Common myeloid progenitor, CD34-positive (primary cell): ENCODE measurements at regions of chr1 and their contacts with region 1.

Region 1: DNA sequence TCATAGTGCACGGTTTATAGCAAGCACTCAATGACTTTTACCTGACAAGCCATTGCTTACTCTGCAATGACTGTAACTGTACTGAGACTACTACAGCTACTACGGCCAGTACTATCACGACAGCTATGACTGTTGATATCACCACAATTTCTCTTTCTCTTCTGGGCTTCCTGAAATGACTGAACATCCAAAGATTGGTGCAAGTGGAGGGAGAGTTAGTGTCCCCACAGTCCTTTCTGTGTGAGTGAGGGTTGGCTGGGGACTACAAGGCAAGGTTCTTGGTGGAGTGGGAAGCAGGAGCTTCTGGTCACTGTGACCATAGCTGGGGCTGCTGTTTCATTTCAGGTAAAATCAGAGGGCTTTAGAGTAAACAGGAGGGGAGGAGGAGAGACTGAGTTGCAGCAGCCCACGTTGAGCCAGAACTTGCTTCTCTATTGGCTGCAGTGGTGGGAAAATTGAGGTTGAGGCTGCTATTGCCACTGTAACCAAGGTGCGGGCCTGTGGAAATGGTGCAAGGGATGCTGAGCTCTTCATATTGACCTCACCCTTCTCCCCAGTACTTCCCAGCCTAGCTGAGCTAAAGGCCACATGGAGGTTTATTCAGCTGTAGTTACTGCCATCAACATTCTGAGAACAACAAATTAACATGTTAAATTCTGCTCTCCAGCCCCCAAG is 14.1 kb upstream of the IL10 start:
- DNase-seq: no peak
- H3K4me3 ChIP-seq: no peak overlapping the region
- H3K27ac ChIP-seq: no peak overlapping the region
- H3K4me1 ChIP-seq: peaks cover 12 to 49% (median 21%) of the 10 kb centered on the region in 4 experiments
- H3K27me3 ChIP-seq: no peaks in the 10 kb centered on the region

Region 2: DNA sequence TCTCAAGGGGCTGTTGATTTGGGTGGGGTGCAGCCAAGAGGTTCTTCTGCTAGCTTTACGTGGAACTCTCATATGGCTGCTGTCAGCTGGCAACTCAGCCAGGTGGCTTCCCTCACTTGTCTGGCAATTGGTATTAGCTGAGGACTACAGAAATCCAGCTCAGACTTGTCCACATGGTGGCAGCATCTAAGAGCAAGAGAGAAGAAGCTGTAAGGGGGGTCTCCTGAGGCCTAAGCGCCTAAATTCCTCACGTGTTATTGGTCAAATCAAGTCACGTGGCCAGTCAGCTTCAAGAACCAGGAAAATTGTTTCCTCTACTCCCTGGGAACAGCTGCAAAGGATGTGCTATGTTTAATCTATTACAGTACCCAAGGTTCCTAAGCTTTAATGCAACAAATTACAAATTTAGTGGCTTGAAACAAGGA is 155.3 kb before region 1 on chr1:
- CTCF ChIA-PET with region 1: no interaction called
- POLR2A ChIA-PET with region 1: no interaction called
- DNase-seq: peak; percentile 86 to 90 (median 88)
- H3K4me3 ChIP-seq: no peak overlapping the region
- H3K27ac ChIP-seq: no peak overlapping the region
- H3K4me1 ChIP-seq: peaks cover 7 to 14% (median 10%) of the 10 kb centered on the region in 4 experiments
- H3K27me3 ChIP-seq: no peaks in the 10 kb centered on the region

Region 3: DNA sequence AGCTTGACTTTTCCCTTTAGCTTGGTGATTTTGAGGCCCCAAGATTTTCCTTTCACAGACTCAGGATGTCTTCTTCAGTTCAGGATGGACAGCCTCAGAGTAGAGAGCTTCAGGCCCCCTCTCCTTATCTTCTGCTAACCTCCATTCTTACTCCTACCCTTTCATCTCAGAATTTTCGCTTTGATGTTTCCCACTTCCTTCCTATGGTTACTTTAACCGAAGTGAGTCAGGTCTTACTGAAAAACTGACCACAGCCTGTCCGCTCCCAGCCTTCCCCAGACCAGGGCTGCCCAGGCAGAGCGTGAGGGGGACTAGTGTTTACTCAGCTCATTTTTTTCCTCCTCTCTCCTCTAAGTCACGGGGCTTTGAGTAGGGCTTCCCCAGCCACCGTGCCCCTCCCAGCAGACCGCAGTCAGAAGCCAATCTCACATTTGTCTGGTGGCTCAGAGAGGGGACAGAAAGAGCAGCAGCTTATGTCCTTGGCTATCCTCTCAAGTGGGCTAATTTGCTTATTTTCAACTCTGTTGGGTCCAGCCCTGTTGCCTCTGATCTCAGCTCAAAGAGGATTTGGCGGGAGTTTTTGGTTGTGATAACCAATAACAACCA is 20.0 kb before region 1 on chr1:
- CTCF ChIA-PET with region 1: interaction called, 11 read pairs
- POLR2A ChIA-PET with region 1: no interaction called
- DNase-seq: peak; percentile 67 to 85 (median 82)
- H3K4me3 ChIP-seq: peak overlapping the region in 3 of 7 experiments; percentile 36 to 52 (median 39)
- H3K27ac ChIP-seq: no peak overlapping the region
- H3K4me1 ChIP-seq: peaks cover 7 to 62% (median 39%) of the 10 kb centered on the region in 4 experiments
- H3K27me3 ChIP-seq: no peaks in the 10 kb centered on the region

Region 4: DNA sequence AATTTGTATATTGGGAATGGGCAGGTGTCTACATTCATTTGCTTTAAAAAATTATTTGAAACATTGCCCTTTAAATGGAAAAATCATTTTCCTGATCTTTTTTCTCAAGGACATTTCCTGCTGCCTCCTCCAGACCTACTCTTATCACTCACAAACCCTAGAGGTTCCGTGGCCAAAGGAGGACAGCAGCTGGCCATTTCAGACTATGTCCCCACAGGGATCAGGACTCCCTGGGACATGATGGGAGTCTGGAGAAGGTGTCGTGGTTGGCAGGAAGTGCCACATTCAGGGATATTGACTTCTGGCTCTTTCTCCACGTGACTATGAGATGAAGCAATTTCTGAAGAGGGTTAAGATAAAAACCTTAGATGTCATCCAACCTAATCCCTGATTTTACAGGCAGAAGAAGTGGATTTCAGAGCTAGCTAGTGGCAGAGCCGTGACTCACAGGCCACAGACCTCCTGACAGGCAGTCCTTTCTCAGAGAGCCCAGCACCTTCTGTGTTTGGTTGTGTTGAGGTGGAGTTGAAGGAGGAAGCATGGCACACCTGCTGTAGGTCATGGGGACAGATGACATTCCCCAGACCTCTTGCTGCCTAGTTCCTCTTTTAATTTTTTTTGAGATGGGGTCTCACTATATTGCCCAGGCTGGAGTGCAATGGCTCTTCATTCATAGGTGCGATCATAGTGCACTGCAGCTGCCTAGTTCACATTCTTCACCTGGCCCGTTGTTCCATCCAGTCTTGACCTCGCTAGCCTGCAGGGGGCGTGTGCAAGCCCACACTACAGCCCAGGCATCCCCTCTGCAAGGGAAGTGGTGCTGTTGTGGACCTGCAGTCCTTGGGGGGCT is 11.4 kb after region 1 on chr1:
- CTCF ChIA-PET with region 1: interaction called, 18 read pairs
- POLR2A ChIA-PET with region 1: no interaction called
- DNase-seq: peak; percentile 42 to 72 (median 60)
- H3K4me3 ChIP-seq: no peak overlapping the region
- H3K27ac ChIP-seq: no peak overlapping the region
- H3K4me1 ChIP-seq: peaks cover 0 to 13% (median under 1%) of the 10 kb centered on the region in 4 experiments
- H3K27me3 ChIP-seq: no peaks in the 10 kb centered on the region

Region 5: GRCh38 chr1:206803221-206803730 is 16.9 kb after region 1 on chr1:
- CTCF ChIA-PET with region 1: interaction called, 18 read pairs
- POLR2A ChIA-PET with region 1: no interaction called
- DNase-seq: no peak
- H3K4me3 ChIP-seq: no peak overlapping the region
- H3K27ac ChIP-seq: no peak overlapping the region
- H3K4me1 ChIP-seq: peaks cover 0 to 10% (median under 1%) of the 10 kb centered on the region in 4 experiments
- H3K27me3 ChIP-seq: no peaks in the 10 kb centered on the region

Region 6: GRCh38 chr1:206834711-206835110 is 48.4 kb after region 1 on chr1:
- CTCF ChIA-PET with region 1: no interaction called
- POLR2A ChIA-PET with region 1: no interaction called
- DNase-seq: no peak
- H3K4me3 ChIP-seq: no peak overlapping the region
- H3K27ac ChIP-seq: no peak overlapping the region
- H3K4me1 ChIP-seq: peaks cover 15 to 53% (median 38%) of the 10 kb centered on the region in 4 experiments
- H3K27me3 ChIP-seq: no peaks in the 10 kb centered on the region